CD8-positive, alpha-beta memory T cell (primary cell): ENCODE measurements at regions of chr1 and their contacts with region 1.

Region 1: DNA sequence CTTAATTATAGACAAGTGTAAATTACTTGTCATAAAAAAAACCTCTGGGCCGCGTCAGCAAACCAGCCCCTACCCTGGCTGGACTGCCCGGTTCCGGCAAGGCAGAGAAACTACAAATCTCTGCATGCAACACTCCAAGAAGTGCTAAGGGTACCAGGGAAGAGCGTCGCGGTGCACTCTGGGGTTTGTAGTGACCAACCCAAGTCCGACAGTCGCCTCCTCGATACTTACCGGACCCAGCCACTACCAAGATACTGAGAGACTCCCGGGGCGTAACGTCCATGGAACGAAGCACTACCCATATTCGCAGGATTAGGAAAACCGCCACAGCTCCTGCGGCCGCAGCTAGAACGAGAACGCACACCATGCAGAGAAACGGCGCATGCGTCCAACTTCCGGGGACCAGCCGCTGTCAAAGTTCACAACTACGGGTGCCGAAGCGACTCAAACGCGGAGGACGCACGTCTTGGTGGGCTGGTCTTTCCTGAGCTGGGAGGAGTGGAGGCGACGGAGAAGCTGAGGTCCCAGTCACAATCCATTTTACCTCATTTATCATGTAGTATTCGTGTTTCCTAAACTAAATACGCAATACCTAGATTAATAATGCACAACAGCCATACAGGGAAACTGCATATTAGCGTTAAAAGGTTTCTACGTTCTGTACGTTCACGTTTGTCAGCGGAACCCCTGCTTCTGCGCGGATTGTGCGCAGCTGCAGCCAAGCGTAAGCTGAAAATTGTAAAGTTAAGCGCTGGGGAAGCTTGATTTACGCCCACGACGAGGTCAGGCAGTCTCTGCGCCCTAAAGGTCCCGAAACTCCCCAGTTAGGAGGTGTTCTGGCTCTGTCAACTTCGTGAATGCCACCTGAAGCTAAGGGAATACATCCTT is at the start of gene ALG14:
- DNase-seq: peak; percentile 88 to 95 (median 93)
- H3K4me3 ChIP-seq: peak within 1 kb of the TSS; percentile 88
- H3K4me3 Mint-ChIP-seq: peak within 1 kb of the TSS; percentile 92 to 100 (median 98)
- H3K27ac ChIP-seq: peak within 1 kb of the TSS; percentile 71
- H3K27ac Mint-ChIP-seq: peak within 1 kb of the TSS; percentile 92 to 99 (median 98)
- H3K4me1 ChIP-seq: peaks cover 16% of the 10 kb centered on the region
- H3K4me1 Mint-ChIP-seq: peaks cover 18 to 25% (median 23%) of the 10 kb centered on the region in 3 donors
- H3K27me3 ChIP-seq: no peaks in the 10 kb centered on the region
- H3K27me3 Mint-ChIP-seq: peaks cover 7 to 11% of the 10 kb centered on the region in 2 donors
- total RNA-seq, gene ALG14: 4.4 to 4.6 TPM

Region 2: GRCh38 chr1:95084317-95085176 is 11.8 kb after region 1 on chr1:
- CTCF ChIA-PET with region 1: interaction called, 18 read pairs
- POLR2A ChIA-PET with region 1: no interaction called
- DNase-seq: peak in 1 of 5 donors; percentile 33
- H3K4me3 ChIP-seq: no peak overlapping the region
- H3K4me3 Mint-ChIP-seq: no peak overlapping the region
- H3K27ac ChIP-seq: no peak overlapping the region
- H3K27ac Mint-ChIP-seq: no peak overlapping the region
- H3K4me1 ChIP-seq: no peaks in the 10 kb centered on the region
- H3K4me1 Mint-ChIP-seq: no peaks in the 10 kb centered on the region
- H3K27me3 ChIP-seq: no peaks in the 10 kb centered on the region
- H3K27me3 Mint-ChIP-seq: peaks cover 7 to 28% of the 10 kb centered on the region in 2 donors

Region 3: DNA sequence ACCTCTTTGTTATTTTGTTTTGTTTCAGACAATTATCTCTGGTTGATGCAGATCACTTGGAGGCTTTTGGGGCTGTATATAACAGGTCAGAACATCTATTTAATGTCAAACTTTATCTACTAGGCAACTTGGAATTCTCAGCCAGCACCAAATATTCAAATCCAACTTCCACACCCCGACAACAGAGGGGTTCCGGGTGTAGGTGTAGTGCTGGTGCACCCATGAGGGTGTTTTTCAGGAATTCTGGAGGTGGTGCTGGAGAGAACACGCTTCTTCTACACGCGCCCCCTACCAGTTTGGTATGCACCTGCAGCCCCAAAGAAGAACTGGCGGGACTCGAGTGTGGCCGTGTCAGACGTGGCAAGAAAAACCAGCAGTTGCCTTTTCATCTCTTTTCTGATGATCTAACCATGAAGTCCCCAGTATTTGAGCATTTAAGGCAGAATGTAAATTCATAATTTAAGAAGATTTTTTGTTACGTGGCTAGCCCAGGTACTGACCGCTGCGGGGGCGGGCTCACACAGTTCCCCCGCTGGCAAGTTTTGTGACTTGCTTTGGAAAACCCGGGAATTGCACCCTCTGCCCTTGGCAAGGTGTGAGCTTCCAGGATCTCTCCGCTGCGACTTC is 43.9 kb after region 1 on chr1:
- CTCF ChIA-PET with region 1: no interaction called
- POLR2A ChIA-PET with region 1: interaction called, 10 read pairs
- DNase-seq: peak; percentile 6 to 68 (median 31)
- H3K4me3 ChIP-seq: peak overlapping the region; percentile 72
- H3K4me3 Mint-ChIP-seq: peak overlapping the region; percentile 84 to 94 (median 91)
- H3K27ac ChIP-seq: peak overlapping the region; percentile 65
- H3K27ac Mint-ChIP-seq: peak overlapping the region in 6 of 8 donors; percentile 22 to 88 (median 62)
- H3K4me1 ChIP-seq: peaks cover 4% of the 10 kb centered on the region
- H3K4me1 Mint-ChIP-seq: peaks cover 10 to 17% (median 13%) of the 10 kb centered on the region in 3 donors
- H3K27me3 ChIP-seq: peaks cover 10% of the 10 kb centered on the region
- H3K27me3 Mint-ChIP-seq: peaks cover 35 to 67% of the 10 kb centered on the region in 2 donors

Region 4: DNA sequence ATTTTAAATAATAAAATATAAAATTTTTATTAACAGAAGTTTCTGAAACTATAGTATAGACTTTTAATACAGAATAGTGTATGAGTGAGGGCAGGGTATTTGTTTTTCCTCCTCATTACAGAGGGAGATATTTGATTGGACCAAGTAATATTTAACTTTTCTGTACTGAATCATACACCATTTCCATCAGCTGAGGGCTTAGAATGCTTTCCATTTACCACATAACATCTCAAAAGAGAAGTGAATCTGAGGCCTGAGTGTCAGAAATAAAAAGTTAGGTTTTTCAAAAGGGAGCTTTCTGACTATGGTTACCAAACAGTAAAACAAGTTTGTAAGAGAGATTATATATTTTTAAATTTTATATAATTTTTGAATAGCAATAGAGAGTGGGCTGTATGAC is 73.9 kb after region 1 on chr1:
- CTCF ChIA-PET with region 1: no interaction called
- POLR2A ChIA-PET with region 1: no interaction called
- DNase-seq: no peak
- H3K4me3 ChIP-seq: no peak overlapping the region
- H3K4me3 Mint-ChIP-seq: no peak overlapping the region
- H3K27ac ChIP-seq: no peak overlapping the region
- H3K27ac Mint-ChIP-seq: no peak overlapping the region
- H3K4me1 ChIP-seq: no peaks in the 10 kb centered on the region
- H3K4me1 Mint-ChIP-seq: no peaks in the 10 kb centered on the region
- H3K27me3 ChIP-seq: no peaks in the 10 kb centered on the region
- H3K27me3 Mint-ChIP-seq: peaks cover 4 to 6% of the 10 kb centered on the region in 2 donors